Body of pancreas (tissue), 4 donors: ENCODE measurements at regions of chr10 and their contacts with region 1.

Region 1: GRCh38 chr10:6416892-6417512 is 163.1 kb downstream of the PRKCQ start:
- DNase-seq: no peak
- ATAC-seq: peak; percentile 68
- H3K4me3 ChIP-seq: no peak overlapping the region
- H3K27ac ChIP-seq: no peak overlapping the region
- H3K4me1 ChIP-seq: no peaks in the 10 kb centered on the region
- H3K27me3 ChIP-seq: no peaks in the 10 kb centered on the region
- CTCF ChIP-seq: peak; percentile 23 to 76 (median 62)
- POLR2A ChIP-seq: no peak

Region 2: GRCh38 chr10:6674291-6674690 is 257.3 kb after region 1 on chr10:
- intact Hi-C with region 1: loop called (anchors 5 kb)
- DNase-seq: peak in 2 of 4 donors; percentile 35 to 53
- ATAC-seq: no peak
- H3K4me3 ChIP-seq: no peak overlapping the region
- H3K27ac ChIP-seq: no peak overlapping the region
- H3K4me1 ChIP-seq: no peaks in the 10 kb centered on the region
- H3K27me3 ChIP-seq: no peaks in the 10 kb centered on the region
- CTCF ChIP-seq: no peak
- POLR2A ChIP-seq: no peak